CD4-positive, alpha-beta memory T cell (primary cell): ENCODE measurements at regions of chr2 and their contacts with region 1.

Region 1: GRCh38 chr2:113198790-113199612 is 25.2 kb downstream of the PSD4 start:
- DNase-seq: peak; percentile 42 to 70 (median 58)
- H3K4me3 ChIP-seq: no peak overlapping the region
- H3K4me3 Mint-ChIP-seq: no peak overlapping the region
- H3K27ac ChIP-seq: no peak overlapping the region
- H3K27ac Mint-ChIP-seq: peak overlapping the region in 2 of 7 donors; percentile 10 to 60
- H3K4me1 ChIP-seq: peaks cover 10% of the 10 kb centered on the region
- H3K4me1 Mint-ChIP-seq: peaks cover 9 to 42% (median 12%) of the 10 kb centered on the region in 4 donors
- H3K27me3 ChIP-seq: no peaks in the 10 kb centered on the region
- H3K27me3 Mint-ChIP-seq: no peaks in the 10 kb centered on the region

Region 2: GRCh38 chr2:111946294-111947114 is 1252.5 kb before region 1 on chr2:
- CTCF ChIA-PET with region 1: no interaction called
- POLR2A ChIA-PET with region 1: no interaction called
- intact Hi-C with region 1: no loop called
- DNase-seq: no peak
- H3K4me3 ChIP-seq: no peak overlapping the region
- H3K4me3 Mint-ChIP-seq: no peak overlapping the region
- H3K27ac ChIP-seq: no peak overlapping the region
- H3K27ac Mint-ChIP-seq: no peak overlapping the region
- H3K4me1 ChIP-seq: no peaks in the 10 kb centered on the region
- H3K4me1 Mint-ChIP-seq: no peaks in the 10 kb centered on the region
- H3K27me3 ChIP-seq: no peaks in the 10 kb centered on the region
- H3K27me3 Mint-ChIP-seq: peaks cover 4 to 11% of the 10 kb centered on the region in 2 donors

Region 3: DNA sequence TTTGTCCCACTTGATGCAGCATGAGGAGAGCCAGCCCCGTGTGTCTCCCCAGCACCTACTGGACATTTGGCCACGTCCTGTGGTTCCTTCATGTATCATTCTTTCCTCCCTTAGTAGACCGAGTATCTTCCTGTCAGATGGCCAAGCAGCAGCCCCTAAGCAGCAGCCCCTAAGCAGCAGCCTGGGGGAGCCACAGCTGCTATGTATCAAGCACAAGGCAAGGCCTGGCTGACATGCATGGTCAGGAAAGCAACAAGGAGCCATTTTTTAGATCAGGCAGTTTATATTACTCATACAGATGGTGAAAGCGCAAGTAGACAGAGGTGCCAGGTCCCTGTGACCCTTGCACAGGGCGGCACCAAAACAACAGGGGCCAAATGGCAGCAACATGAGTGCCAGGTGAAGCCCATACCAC is 592.5 kb before region 1 on chr2:
- CTCF ChIA-PET with region 1: no interaction called
- POLR2A ChIA-PET with region 1: no interaction called
- intact Hi-C with region 1: no loop called
- DNase-seq: no peak
- H3K4me3 ChIP-seq: no peak overlapping the region
- H3K4me3 Mint-ChIP-seq: no peak overlapping the region
- H3K27ac ChIP-seq: no peak overlapping the region
- H3K27ac Mint-ChIP-seq: no peak overlapping the region
- H3K4me1 ChIP-seq: no peaks in the 10 kb centered on the region
- H3K4me1 Mint-ChIP-seq: no peaks in the 10 kb centered on the region
- H3K27me3 ChIP-seq: no peaks in the 10 kb centered on the region
- H3K27me3 Mint-ChIP-seq: no peaks in the 10 kb centered on the region

Region 4: DNA sequence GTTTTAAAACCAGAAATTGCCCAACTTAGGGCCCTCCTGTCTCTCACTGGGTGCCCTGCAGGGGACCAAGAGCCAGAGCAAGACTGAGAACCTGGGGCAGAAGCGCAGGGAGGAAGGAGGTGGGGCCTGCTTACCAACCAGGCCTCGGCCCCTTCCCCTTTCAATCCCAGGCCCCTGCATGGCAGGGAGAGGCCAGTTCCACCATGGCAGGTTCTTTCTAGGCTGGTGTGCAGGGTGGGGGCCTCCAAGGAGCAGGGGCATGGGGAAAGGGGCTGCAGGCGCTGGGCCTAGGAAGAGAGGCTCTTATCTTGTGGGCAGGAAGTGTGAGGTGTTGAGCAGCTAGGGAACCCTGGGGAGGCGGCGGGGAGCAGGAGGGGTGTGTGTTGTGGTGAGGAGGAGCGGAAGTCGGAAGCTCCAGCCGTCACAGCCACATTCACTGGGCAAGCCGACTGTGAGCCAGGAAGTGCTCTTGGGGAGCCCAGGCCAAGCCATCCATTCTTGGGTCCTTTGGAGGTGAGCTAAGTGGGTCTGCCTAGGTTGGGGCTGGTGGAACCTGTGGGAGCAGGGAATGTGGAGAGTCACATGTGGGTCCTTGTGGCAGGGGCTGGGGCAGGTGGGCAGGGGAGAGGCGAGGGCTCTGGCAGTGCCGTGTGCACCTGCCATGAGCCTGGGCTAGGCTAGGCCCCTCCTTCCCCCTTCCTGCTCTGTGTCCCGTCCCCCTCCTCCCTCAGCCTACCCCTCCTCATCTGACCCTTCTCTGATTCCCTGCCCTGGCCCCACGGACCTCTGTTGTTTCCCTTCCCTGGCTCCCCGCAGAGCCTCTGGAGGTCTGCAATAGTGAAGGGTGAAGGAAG is 25.2 kb before region 1 on chr2 and contains the start of gene PSD4:
- CTCF ChIA-PET with region 1: interaction called, 236 read pairs
- POLR2A ChIA-PET with region 1: interaction called, 88 read pairs
- intact Hi-C with region 1: loop called (anchors 1 kb)
- DNase-seq: peak; percentile 89 to 94 (median 91)
- H3K4me3 ChIP-seq: peak within 1 kb of the TSS; percentile 81 to 82
- H3K4me3 Mint-ChIP-seq: peak within 1 kb of the TSS; percentile 88 to 99 (median 94)
- H3K27ac ChIP-seq: peak within 1 kb of the TSS; percentile 85
- H3K27ac Mint-ChIP-seq: peak within 1 kb of the TSS; percentile 92 to 100 (median 96)
- H3K4me1 ChIP-seq: peaks cover 80% of the 10 kb centered on the region
- H3K4me1 Mint-ChIP-seq: peaks cover 56 to 89% (median 71%) of the 10 kb centered on the region in 4 donors
- H3K27me3 ChIP-seq: no peaks in the 10 kb centered on the region
- H3K27me3 Mint-ChIP-seq: peaks cover 2% of the 10 kb centered on the region in 2 donors
- total RNA-seq, gene PSD4: 100.0 to 101 TPM

Region 5: GRCh38 chr2:113181258-113182051 is 17.5 kb before region 1 on chr2:
- CTCF ChIA-PET with region 1: interaction called, 236 read pairs
- POLR2A ChIA-PET with region 1: interaction called, 88 read pairs
- intact Hi-C with region 1: loop called (anchors 2 kb)
- DNase-seq: peak in 3 of 5 donors; percentile 27 to 36 (median 29)
- H3K4me3 ChIP-seq: peak overlapping the region in 1 of 2 donors; percentile 7
- H3K4me3 Mint-ChIP-seq: peak overlapping the region; percentile 61 to 93 (median 70)
- H3K27ac ChIP-seq: peak overlapping the region; percentile 27
- H3K27ac Mint-ChIP-seq: peak overlapping the region; percentile 86 to 94 (median 91)
- H3K4me1 ChIP-seq: peaks cover 100% of the 10 kb centered on the region
- H3K4me1 Mint-ChIP-seq: peaks cover 69 to 99% (median 90%) of the 10 kb centered on the region in 4 donors
- H3K27me3 ChIP-seq: no peaks in the 10 kb centered on the region
- H3K27me3 Mint-ChIP-seq: no peaks in the 10 kb centered on the region

Region 6: GRCh38 chr2:113390124-113390849 is 191.3 kb after region 1 on chr2:
- CTCF ChIA-PET with region 1: interaction called, 48 read pairs
- POLR2A ChIA-PET with region 1: interaction called, 4 read pairs
- intact Hi-C with region 1: loop called (anchors 5 kb)
- DNase-seq: peak; percentile 70 to 84 (median 80)
- H3K4me3 ChIP-seq: peak overlapping the region; percentile 27 to 40
- H3K4me3 Mint-ChIP-seq: peak overlapping the region; percentile 61 to 86 (median 72)
- H3K27ac ChIP-seq: no peak overlapping the region
- H3K27ac Mint-ChIP-seq: peak overlapping the region; percentile 44 to 73 (median 67)
- H3K4me1 ChIP-seq: peaks cover 4% of the 10 kb centered on the region
- H3K4me1 Mint-ChIP-seq: peaks cover 5 to 16% (median 10%) of the 10 kb centered on the region in 4 donors
- H3K27me3 ChIP-seq: no peaks in the 10 kb centered on the region
- H3K27me3 Mint-ChIP-seq: peaks cover 1 to 6% of the 10 kb centered on the region in 2 donors